ENCODE measurements at regions of chr1 and their contacts with region 1.

Region 1: GRCh38 chr1:11719313-11720032 is 16.5 kb upstream of the AGTRAP start:
- DNase-seq: peak; percentile 81
- ATAC-seq: peak; percentile 75
- H3K4me3 Mint-ChIP-seq: peak overlapping the region; percentile 51
- H3K27ac Mint-ChIP-seq: no peak overlapping the region
- H3K4me1 Mint-ChIP-seq: peaks cover 9% of the 10 kb centered on the region
- H3K27me3 Mint-ChIP-seq: no peaks in the 10 kb centered on the region; the same call in 1 of the 2 replicates
- CTCF ChIP-seq: peak; percentile 96

Region 2: GRCh38 chr1:11661103-11661502 is 58.4 kb before region 1 on chr1:
- CTCF ChIA-PET with region 1: interaction called, 37 read pairs
- POLR2A ChIA-PET with region 1: no interaction called
- DNase-seq: no peak
- ATAC-seq: no peak
- H3K4me3 Mint-ChIP-seq: no peak overlapping the region
- H3K27ac Mint-ChIP-seq: no peak overlapping the region
- H3K4me1 Mint-ChIP-seq: no peaks in the 10 kb centered on the region
- H3K27me3 Mint-ChIP-seq: no peaks in the 10 kb centered on the region; the same call in 1 of the 2 replicates
- CTCF ChIP-seq: no peak

Region 3: DNA sequence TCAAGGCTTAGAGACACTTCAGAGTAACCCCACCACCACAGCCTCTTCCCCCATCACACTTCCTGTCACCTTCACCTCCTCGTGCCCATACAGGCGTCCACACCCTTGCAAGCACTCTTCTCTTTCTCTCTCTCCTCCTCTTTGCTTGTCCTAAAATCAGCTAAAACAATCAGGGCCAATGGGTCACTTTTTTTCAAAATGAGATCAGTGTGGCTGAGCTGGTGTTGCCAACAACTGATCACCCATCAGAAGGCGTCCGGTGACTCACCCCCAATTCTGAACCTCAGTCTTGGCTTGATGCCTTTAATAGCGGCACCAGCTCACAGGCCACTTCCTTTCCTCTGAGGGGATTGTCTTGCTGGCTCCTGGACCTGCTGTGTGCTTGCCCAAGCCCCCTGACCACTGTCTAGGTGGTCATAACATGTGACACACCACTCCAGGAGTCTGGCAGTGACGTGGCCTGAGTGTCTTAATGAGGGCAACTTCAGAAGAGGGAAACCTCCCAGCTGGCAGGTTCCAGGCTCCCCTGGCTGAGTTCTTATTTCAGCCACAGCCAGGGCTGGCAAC is 26.4 kb before region 1 on chr1:
- CTCF ChIA-PET with region 1: interaction called, 15 read pairs
- POLR2A ChIA-PET with region 1: no interaction called
- DNase-seq: no peak
- ATAC-seq: no peak
- H3K4me3 Mint-ChIP-seq: peak overlapping the region; percentile 89
- H3K27ac Mint-ChIP-seq: 0 out of 2 replicates have a peak overlapping the region, but pooled peaks have one; percentile 0
- H3K4me1 Mint-ChIP-seq: peaks cover 55% of the 10 kb centered on the region
- H3K27me3 Mint-ChIP-seq: no peaks in the 10 kb centered on the region
- CTCF ChIP-seq: no peak

Region 4: DNA sequence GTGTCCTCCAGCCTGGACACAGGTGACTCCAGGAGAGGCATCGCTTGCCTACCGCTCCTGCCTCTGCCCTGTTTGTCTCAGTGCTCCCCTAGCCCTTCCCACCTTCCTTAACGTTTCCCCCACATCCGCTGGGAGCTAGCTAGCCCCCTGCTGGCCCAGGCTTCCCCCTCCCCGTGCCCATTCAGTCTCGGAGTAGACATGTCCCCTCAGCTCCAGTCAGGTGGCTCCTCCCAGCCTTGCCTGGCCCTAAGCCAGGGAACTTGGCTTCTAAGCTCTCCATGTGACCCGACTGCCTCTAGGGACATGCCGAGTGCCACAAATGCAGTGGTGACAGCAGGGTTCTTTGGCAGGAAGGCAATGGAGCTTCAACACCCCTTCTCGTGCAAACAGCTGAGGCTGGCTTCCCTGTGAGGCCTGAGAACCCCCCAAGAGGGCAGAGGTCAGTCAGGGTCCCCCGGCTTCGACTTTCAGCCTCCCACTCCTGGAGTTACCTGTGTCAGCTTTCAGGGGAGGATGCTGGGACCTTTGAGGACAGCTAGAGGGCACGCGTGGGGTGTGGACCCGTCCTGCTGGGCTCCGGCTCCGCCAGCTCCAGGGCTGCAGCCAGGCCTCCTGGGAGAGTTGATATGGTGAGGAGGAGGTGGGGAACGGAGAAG is 11.7 kb before region 1 on chr1:
- CTCF ChIA-PET with region 1: interaction called, 55 read pairs
- POLR2A ChIA-PET with region 1: interaction called, 5 read pairs
- DNase-seq: no peak
- ATAC-seq: peak; percentile 19
- H3K4me3 Mint-ChIP-seq: no peak overlapping the region
- H3K27ac Mint-ChIP-seq: peak overlapping the region; percentile 25; the same call in 1 of the 2 replicates
- H3K4me1 Mint-ChIP-seq: peaks cover 48% of the 10 kb centered on the region
- H3K27me3 Mint-ChIP-seq: no peaks in the 10 kb centered on the region
- CTCF ChIP-seq: no peak

Region 5: DNA sequence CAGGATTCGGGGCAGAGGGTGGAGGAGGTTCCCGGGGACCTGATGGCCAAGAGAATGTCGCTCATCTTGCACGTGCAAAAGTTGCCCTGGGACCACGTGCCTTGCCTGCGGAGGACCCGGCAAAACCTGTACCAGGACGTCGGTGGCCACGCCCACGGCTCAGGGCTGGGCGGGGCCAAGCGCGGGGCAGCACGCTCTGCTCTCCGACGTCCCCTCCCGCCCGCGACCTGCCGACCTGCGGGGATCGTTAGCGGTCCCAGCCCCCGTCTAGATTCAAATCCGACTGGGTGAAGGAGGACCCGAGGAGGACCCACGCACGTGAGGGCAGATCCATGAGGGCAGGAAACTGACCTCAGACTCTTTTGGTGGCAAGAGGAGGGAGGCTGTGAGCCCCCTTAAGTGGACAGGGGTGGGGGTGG is 42.5 kb after region 1 on chr1 and contains the start of gene C1orf167:
- CTCF ChIA-PET with region 1: no interaction called
- POLR2A ChIA-PET with region 1: no interaction called
- DNase-seq: peak; percentile 73
- ATAC-seq: peak; percentile 87
- H3K4me3 Mint-ChIP-seq: peak within 1 kb of the TSS; percentile 56
- H3K27ac Mint-ChIP-seq: no peak within 1 kb of the TSS
- H3K4me1 Mint-ChIP-seq: peaks cover 10% of the 10 kb centered on the region
- H3K27me3 Mint-ChIP-seq: peaks cover 59% of the 10 kb centered on the region
- CTCF ChIP-seq: no peak
- total RNA-seq, gene C1orf167: 1.2 to 3.1 TPM (median 2.8 TPM) in 3 replicates

Region 6: GRCh38 chr1:11874258-11874562 is 154.7 kb after region 1 on chr1:
- CTCF ChIA-PET with region 1: no interaction called
- POLR2A ChIA-PET with region 1: no interaction called
- DNase-seq: no peak
- ATAC-seq: no peak
- H3K4me3 Mint-ChIP-seq: no peak overlapping the region
- H3K27ac Mint-ChIP-seq: 0 out of 2 replicates have a peak overlapping the region, but pooled peaks have one; percentile 20
- H3K4me1 Mint-ChIP-seq: no peaks in the 10 kb centered on the region
- H3K27me3 Mint-ChIP-seq: no peaks in the 10 kb centered on the region
- CTCF ChIP-seq: no peak

Measured in WTC11 (cell line).